ENCODE measurements at regions of chr16 and their contacts with region 1.

Region 1: DNA sequence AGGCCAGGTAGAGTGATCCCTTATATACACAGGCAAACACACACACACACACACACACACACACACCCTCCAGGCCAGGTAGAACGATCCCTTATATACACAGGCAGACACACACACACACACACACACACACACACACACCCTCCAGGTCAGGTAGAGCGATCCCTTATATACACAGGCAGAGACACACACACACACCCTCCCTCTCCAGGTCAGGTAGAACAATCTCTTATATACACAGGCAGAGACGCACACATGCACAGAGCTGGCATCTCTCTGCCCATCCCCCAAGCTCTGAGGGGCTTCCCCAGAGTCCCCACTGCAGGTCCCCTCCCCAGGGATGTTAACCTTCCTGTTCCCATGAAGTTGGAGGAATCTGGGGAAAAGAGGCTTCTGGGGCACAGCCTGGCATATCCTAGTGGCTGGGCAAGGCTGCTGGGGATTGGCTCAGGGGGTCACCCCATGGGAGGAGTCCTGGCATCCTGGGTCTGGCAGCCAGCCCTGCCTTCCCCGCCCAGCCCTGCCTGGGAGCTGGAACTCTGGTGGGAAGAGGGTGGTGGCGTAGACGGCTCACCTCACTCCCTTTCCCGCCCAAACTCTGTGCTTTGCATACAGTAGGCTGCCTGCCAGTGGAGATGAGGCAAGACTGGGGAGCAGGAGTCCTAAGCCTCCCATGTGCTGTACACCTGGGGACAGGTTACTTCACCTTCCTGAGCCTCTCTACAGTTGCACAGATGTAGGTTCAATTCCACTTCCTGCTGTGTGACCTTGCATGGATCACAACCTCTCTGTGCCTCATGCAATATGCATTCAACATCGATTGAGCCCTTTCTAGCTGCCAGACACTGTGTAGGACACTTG is 41.8 kb downstream of the TEKT5 start:
- DNase-seq: peak; percentile 72
- H3K4me3 ChIP-seq: peak overlapping the region; percentile 13
- H3K27ac ChIP-seq: peak overlapping the region; percentile 18
- H3K4me1 ChIP-seq: peaks cover 24% of the 10 kb centered on the region
- H3K27me3 ChIP-seq: no peaks in the 10 kb centered on the region
- CTCF ChIP-seq: no peak

Region 2: GRCh38 chr16:10619261-10619849 is 33.6 kb before region 1 on chr16:
- CTCF ChIA-PET with region 1: no interaction called
- POLR2A ChIA-PET with region 1: interaction called, 14 read pairs
- intact Hi-C with region 1: no loop called
- DNase-seq: peak; percentile 31
- H3K4me3 ChIP-seq: peak overlapping the region; percentile 17
- H3K27ac ChIP-seq: no peak overlapping the region
- H3K4me1 ChIP-seq: peaks cover 28% of the 10 kb centered on the region
- H3K27me3 ChIP-seq: no peaks in the 10 kb centered on the region
- CTCF ChIP-seq: no peak

Region 3: DNA sequence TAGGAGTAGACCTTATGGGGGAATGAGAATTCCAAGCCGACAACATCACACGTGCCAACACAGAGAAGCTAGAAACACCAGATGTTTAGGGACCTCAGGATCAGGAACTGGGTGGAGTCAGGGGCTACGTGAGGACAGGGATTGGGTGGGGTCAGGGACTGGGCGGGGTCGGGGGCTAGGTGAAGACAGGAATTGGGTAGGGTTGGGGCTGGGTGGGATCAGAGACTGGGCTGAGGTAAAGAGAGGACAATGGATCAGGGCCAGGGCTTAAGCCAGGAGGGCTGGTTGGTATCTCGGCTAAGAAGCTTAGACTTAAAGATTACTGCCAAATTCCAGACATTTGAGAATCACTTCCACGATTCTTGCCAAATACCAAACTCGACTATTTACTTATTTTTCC is 30.2 kb after region 1 on chr16:
- CTCF ChIA-PET with region 1: no interaction called
- POLR2A ChIA-PET with region 1: no interaction called
- intact Hi-C with region 1: no loop called
- DNase-seq: no peak
- H3K4me3 ChIP-seq: no peak overlapping the region
- H3K27ac ChIP-seq: no peak overlapping the region
- H3K4me1 ChIP-seq: peaks cover 11% of the 10 kb centered on the region
- H3K27me3 ChIP-seq: no peaks in the 10 kb centered on the region
- CTCF ChIP-seq: no peak

Region 4: GRCh38 chr16:10699756-10700155 is 46.8 kb after region 1 on chr16:
- CTCF ChIA-PET with region 1: no interaction called
- POLR2A ChIA-PET with region 1: no interaction called
- intact Hi-C with region 1: no loop called
- DNase-seq: no peak
- H3K4me3 ChIP-seq: no peak overlapping the region
- H3K27ac ChIP-seq: no peak overlapping the region
- H3K4me1 ChIP-seq: no peaks in the 10 kb centered on the region
- H3K27me3 ChIP-seq: no peaks in the 10 kb centered on the region
- CTCF ChIP-seq: no peak

Region 5: GRCh38 chr16:11066231-11066870 is 413.4 kb after region 1 on chr16:
- CTCF ChIA-PET with region 1: no interaction called
- POLR2A ChIA-PET with region 1: no interaction called
- intact Hi-C with region 1: no loop called
- DNase-seq: no peak
- H3K4me3 ChIP-seq: no peak overlapping the region
- H3K27ac ChIP-seq: no peak overlapping the region
- H3K4me1 ChIP-seq: no peaks in the 10 kb centered on the region
- H3K27me3 ChIP-seq: no peaks in the 10 kb centered on the region
- CTCF ChIP-seq: no peak